ENCODE measurements at regions of chr10 and their contacts with region 1.

Region 1: GRCh38 chr10:14536241-14537213 is 205.8 kb upstream of the FRMD4A start:
- DNase-seq: peak; percentile 59
- H3K4me3 ChIP-seq: no peak overlapping the region
- H3K27ac ChIP-seq: no peak overlapping the region
- H3K4me1 ChIP-seq: peaks cover 4% of the 10 kb centered on the region
- H3K27me3 ChIP-seq: no peaks in the 10 kb centered on the region
- CTCF ChIP-seq: peak; percentile 75 to 85

Region 2: DNA sequence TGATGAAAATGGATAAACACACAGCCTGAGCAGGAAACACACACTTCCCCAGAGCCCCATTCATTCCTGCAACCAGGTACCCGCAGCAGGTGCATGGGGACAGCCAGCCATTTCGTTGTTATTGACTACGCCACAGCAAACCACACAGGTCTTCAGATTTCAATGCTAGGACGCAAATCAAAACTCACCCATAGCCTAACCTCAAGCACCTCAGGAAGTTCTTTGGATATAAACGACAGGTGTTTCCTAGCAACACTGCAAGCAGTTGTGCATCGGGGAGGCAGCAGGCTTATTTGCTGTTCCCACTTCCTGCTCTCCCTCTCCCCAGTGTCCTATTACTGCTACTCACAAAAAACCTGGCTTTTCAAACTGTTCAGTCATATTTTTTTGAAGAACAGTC is 29.4 kb before region 1 on chr10:
- CTCF ChIA-PET with region 1: no interaction called
- dilution Hi-C with region 1: no loop called
- in situ Hi-C with region 1: no loop called
- intact Hi-C with region 1: no loop called
- DNase-seq: no peak
- H3K4me3 ChIP-seq: no peak overlapping the region
- H3K27ac ChIP-seq: no peak overlapping the region
- H3K4me1 ChIP-seq: no peaks in the 10 kb centered on the region
- H3K27me3 ChIP-seq: no peaks in the 10 kb centered on the region
- CTCF ChIP-seq: no peak

Region 3: GRCh38 chr10:14822879-14823755 is 286.6 kb after region 1 on chr10:
- CTCF ChIA-PET with region 1: interaction called, 3 read pairs
- dilution Hi-C with region 1: no loop called
- in situ Hi-C with region 1: loop called (anchors 10 kb)
- intact Hi-C with region 1: loop called (anchors 1 kb)
- DNase-seq: peak; percentile 12
- H3K4me3 ChIP-seq: no peak overlapping the region
- H3K27ac ChIP-seq: no peak overlapping the region
- H3K4me1 ChIP-seq: peaks cover 7% of the 10 kb centered on the region
- H3K27me3 ChIP-seq: no peaks in the 10 kb centered on the region
- CTCF ChIP-seq: peak; percentile 57 to 72

Region 4: DNA sequence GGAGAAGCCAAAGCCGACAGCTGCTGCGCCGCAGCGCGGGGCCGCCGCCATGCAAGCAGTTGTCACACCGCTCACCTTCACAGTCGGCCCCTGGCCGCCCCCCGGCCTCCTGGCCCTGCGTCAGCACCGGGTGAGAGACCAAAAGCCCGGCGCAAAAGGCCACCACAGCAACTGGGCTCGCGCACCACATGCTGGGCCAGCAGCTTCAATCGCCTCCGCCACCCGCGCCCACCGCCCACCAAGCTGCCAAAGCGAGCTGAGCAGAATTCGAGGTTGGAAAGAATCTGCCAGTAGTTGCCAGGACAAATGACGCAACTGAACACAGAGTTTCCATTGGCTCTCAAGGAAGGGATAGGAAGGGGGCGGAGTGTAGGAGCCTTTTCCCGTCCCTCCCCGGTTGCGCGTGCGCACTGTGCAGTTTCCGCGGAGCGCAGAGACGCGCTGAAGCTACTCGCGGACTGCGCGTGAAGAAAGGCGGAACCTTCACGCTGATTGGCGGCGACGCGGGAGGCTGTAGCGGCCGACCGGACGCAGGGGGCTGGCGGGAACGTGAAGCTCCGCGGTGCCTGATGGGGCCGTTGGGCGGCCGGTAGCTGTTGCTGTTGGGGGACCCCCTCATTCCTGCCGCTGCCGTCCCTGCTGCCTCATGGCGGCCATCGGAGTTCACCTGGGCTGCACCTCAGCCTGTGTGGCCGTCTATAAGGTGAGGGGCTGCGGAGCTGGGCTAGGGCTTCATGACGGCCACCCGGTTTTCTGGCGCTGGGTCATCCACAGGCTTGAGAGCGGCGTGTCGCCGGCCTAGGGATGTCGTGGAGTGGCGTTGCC is 301.4 kb after region 1 on chr10 and contains the starts of genes CDNF, HSPA14 and MSANTD7:
- CTCF ChIA-PET with region 1: no interaction called
- dilution Hi-C with region 1: no loop called
- in situ Hi-C with region 1: no loop called
- intact Hi-C with region 1: loop called (anchors 1 kb)
- DNase-seq: peak; percentile 99
- H3K4me3 ChIP-seq: peak within 1 kb of the TSS; percentile 72 to 90 (median 81)
- H3K27ac ChIP-seq: peak within 1 kb of the TSS; percentile 90
- H3K4me1 ChIP-seq: peaks cover 8% of the 10 kb centered on the region
- H3K27me3 ChIP-seq: no peaks in the 10 kb centered on the region
- CTCF ChIP-seq: no peak
- total RNA-seq, gene CDNF: 0.83 to 1.5 TPM
- total RNA-seq, gene HSPA14: 11.5 to 20.2 TPM
- total RNA-seq, gene MSANTD7: 15.1 to 20.5 TPM

Region 5: GRCh38 chr10:14878266-14879054 is 341.9 kb after region 1 on chr10 and contains the start of gene SUV39H2:
- CTCF ChIA-PET with region 1: interaction called, 3 read pairs
- dilution Hi-C with region 1: no loop called
- in situ Hi-C with region 1: no loop called
- intact Hi-C with region 1: loop called (anchors 5 kb)
- DNase-seq: peak; percentile 93
- H3K4me3 ChIP-seq: peak within 1 kb of the TSS; percentile 77 to 96 (median 93)
- H3K27ac ChIP-seq: peak within 1 kb of the TSS; percentile 89
- H3K4me1 ChIP-seq: peaks cover 16% of the 10 kb centered on the region
- H3K27me3 ChIP-seq: no peaks in the 10 kb centered on the region
- CTCF ChIP-seq: peak in 1 of 2 donors; percentile 2
- total RNA-seq, gene SUV39H2: 8.5 to 17.2 TPM

Region 6: GRCh38 chr10:14971867-14972448 is 435.4 kb after region 1 on chr10:
- CTCF ChIA-PET with region 1: no interaction called
- dilution Hi-C with region 1: no loop called
- in situ Hi-C with region 1: no loop called
- intact Hi-C with region 1: loop called (anchors 1 kb)
- DNase-seq: no peak
- H3K4me3 ChIP-seq: no peak overlapping the region
- H3K27ac ChIP-seq: no peak overlapping the region
- H3K4me1 ChIP-seq: no peaks in the 10 kb centered on the region
- H3K27me3 ChIP-seq: no peaks in the 10 kb centered on the region
- CTCF ChIP-seq: peak; percentile 18 to 57

Region 7: DNA sequence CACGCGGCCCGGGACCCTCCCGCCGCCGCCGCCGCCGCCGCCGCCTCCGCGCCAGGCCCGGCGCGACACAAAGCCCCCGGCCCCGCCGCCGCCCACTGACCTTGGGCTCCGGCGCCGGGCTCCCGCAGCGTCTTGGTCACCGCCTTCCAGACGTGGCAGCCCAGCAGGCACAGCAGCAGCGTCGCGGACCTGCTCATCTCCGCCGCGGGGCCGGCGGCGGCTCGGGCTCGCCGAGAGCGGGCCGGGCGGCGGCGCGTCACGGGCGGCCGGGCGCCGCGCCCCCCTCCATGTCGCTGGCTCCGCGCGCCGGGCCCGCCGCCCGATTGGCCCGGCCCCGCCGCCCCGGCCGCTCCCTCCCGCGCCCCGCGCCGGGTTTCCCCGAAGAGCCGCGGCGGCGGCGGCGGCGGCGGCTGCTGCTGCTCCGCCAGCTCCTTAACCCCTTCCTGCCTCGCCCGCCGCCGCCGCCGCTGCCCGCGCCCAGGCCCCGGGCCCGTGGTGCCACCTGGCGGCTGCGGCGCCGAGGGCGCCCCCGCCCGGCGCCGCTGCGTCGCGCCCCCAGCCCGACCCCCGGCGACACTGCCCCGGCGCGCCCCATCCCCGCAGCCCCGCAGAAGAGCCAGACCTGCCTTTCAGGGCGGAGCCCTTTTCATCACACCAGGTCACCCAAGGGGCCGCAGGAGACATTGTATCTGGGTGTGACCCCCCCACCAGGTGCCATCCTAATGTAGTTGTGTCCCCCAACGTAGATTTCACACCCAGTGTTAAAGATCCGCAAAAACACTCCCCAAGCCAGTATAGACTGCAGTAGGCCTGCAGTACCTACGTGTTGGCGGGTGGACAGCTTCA is 834.6 kb after region 1 on chr10 and contains the start of gene FAM171A1:
- CTCF ChIA-PET with region 1: no interaction called
- dilution Hi-C with region 1: no loop called
- in situ Hi-C with region 1: no loop called
- intact Hi-C with region 1: loop called (anchors 5 kb)
- DNase-seq: peak; percentile 56
- H3K4me3 ChIP-seq: peak within 1 kb of the TSS; percentile 65 to 87 (median 68)
- H3K27ac ChIP-seq: no peak within 1 kb of the TSS
- H3K4me1 ChIP-seq: peaks cover 4% of the 10 kb centered on the region
- H3K27me3 ChIP-seq: no peaks in the 10 kb centered on the region
- CTCF ChIP-seq: peak in 1 of 2 donors; percentile 17
- total RNA-seq, gene FAM171A1: 15.5 to 25.2 TPM

Measured in mammary epithelial cell (primary cell).